Ascending aorta (tissue), 2 donors: ENCODE measurements at regions of chr9 and their contacts with region 1.

Region 1: DNA sequence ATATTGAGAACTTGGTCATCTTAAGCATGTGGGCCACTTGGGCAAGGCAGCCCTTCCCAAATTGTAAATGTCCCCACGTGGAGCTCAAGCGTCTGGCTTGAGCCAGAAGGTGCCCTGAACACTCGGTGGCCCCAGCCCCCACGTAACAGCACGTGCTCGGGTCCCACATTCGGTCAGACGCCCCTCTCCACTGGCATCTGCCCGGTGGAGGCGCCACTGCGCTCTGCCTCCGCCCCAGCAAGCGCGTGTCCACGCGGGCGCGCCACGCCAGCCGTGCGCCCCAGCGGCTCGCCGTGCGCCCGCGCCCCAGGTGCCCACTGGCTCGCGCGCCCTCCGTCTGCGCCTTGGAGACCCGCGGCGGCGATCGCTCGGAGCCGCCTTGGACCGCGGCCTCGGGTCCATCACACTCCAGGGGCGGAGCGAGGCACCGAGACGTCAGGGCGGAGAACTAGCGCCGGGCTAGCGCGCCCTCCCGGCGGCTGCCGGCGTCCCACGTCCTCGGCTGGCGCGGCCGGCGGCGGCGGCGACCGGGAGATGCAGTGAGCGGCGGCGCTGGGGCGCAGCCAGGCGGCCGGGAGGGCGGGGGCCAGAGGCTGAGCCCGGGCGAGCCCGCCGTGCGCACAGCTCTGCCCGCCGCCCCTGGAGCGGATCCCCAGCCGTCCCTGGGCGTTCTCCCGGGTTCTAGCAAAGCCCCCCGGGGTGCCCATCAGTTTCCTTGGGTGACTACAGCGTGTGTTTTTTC is at the start of gene PALM2AKAP2:
- DNase-seq: peak in 1 of 2 donors; percentile 86
- H3K4me3 ChIP-seq: peak within 1 kb of the TSS; percentile 68 to 88
- H3K27ac ChIP-seq: peak within 1 kb of the TSS; percentile 86 to 88
- H3K4me1 ChIP-seq: peaks cover 3 to 12% of the 10 kb centered on the region in 2 donors
- H3K27me3 ChIP-seq: no peaks in the 10 kb centered on the region
- CTCF ChIP-seq: peak; percentile 6 to 62 (median 31)
- total RNA-seq, gene PALM2AKAP2: 38.2 TPM

Region 2: GRCh38 chr9:109652964-109653363 is 126.9 kb before region 1 on chr9:
- intact Hi-C with region 1: loop called (anchors 5 kb)
- DNase-seq: no peak
- H3K4me3 ChIP-seq: no peak overlapping the region
- H3K27ac ChIP-seq: no peak overlapping the region
- H3K4me1 ChIP-seq: no peaks in the 10 kb centered on the region
- H3K27me3 ChIP-seq: no peaks in the 10 kb centered on the region
- CTCF ChIP-seq: peak; percentile 52 to 66 (median 53)

Region 3: DNA sequence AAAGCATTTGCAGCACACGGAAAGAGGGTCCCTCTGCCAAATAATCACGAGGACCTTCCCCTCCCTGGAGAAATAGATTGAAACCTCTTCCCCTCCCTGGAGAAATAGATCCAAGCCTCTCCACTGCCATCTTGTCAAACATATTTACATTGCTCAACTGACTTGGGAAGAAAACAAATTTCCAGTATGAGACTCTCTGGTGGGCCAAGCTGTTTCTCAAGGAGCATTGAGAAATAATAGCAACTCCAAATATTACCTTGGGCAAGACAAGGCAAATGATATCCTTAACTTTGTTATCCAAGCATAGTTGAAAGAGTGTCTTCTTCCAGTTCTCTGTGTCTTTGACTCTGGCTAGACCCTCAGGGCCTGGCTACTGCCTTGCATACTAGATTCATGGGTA is 45.1 kb before region 1 on chr9:
- intact Hi-C with region 1: no loop called
- DNase-seq: no peak
- H3K4me3 ChIP-seq: no peak overlapping the region
- H3K27ac ChIP-seq: no peak overlapping the region
- H3K4me1 ChIP-seq: peaks cover 0 to 8% of the 10 kb centered on the region in 2 donors
- H3K27me3 ChIP-seq: no peaks in the 10 kb centered on the region
- CTCF ChIP-seq: no peak

Region 4: DNA sequence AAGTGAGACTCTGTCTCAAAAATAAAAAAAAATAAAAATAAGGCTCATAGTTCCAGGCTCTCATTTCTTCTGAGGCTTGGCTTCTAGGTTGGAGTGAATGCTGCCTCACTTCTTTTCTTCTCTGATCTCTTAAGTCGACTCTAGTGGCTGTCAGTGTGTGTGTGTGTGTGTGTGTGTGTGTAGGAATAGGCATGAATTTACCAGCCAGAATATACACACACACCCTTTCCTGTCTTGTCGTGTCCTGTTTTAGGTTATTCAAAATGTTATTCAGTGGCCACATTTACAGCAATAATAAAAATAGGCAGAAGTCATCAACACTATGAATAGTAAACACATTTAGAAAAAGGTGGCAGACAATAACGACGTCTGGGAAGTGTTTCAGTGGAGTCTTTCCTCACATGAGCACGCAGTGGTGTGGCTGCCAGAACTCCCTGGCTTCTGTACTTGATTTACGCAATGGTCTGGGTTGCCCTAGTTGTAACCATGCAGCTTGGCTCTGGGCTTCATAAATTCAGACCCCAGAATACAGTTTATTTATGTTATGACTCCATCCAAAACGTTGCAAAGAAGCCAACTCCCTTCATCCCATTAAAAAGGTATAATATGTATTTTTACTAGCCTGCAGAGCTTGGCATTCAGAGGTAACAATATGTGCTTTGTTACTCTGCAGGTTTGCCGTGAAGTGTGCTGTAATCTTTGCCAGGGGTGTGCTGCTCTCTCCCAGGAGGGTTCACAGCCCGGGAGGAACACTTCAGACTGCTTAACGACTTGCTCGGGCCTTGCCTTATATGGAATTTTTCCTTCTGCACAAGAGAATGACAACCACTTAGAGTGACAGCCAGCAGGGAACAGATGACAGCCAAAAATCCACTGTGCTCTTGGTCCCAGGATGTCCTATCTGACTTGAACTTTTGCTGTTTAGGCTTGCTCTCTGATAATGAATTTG is 34.3 kb before region 1 on chr9:
- intact Hi-C with region 1: loop called (anchors 2 kb)
- DNase-seq: peak; percentile 44 to 88
- H3K4me3 ChIP-seq: peak overlapping the region in 1 of 2 donors; percentile 24
- H3K27ac ChIP-seq: peak overlapping the region; percentile 76 to 86
- H3K4me1 ChIP-seq: peaks cover 15 to 31% of the 10 kb centered on the region in 2 donors
- H3K27me3 ChIP-seq: no peaks in the 10 kb centered on the region
- CTCF ChIP-seq: no peak

Region 5: DNA sequence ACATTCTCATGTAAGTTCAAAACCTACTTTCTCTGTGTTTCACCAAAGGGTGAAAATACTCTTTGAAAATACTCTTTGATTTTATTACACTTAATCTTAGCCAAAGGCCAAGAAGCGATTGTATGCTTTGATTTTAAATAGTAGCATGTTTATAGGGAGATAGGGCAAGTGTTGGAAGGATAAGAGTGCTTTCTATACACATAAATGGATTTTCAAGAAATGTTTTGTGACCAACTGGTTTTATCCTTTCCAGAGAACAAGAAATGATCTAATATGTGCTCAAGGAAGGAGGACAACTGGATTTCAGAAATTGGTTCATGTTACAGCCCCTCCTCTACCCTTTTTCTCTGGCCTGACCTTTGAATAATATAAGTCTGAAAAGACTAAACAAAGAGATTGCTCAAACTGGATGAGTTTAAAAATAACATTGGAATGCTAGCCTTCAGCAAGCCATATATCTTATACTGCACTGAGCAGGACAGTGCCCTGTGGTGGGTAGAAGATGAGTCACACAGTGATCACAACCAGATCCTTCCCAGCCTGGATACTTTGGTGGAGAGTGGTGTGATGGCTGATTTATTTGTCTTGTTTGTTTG is 13.2 kb after region 1 on chr9:
- intact Hi-C with region 1: loop called (anchors 2 kb)
- DNase-seq: peak in 1 of 2 donors; percentile 63
- H3K4me3 ChIP-seq: no peak overlapping the region
- H3K27ac ChIP-seq: peak overlapping the region; percentile 88 to 96
- H3K4me1 ChIP-seq: peaks cover 20 to 81% of the 10 kb centered on the region in 2 donors
- H3K27me3 ChIP-seq: no peaks in the 10 kb centered on the region
- CTCF ChIP-seq: no peak

Region 6: DNA sequence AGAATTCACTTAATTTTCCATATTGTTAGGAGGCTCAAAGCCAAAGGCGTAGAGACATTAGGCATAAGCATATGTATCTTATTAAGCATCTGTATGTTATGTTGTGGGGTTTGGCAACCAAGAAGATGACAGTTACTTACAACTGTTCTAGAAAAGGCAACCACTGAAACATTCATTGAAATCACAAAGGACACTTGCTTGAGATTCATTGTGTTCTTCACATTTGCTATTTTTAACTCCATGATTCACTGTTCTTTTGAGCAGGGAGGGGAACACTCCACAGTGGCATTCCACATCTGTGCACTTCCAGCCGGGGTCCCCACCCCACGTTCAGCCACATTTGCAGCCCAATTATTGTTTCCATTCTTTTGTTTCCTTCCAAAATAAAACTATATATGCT is 107.2 kb after region 1 on chr9:
- intact Hi-C with region 1: no loop called
- DNase-seq: no peak
- H3K4me3 ChIP-seq: no peak overlapping the region
- H3K27ac ChIP-seq: no peak overlapping the region
- H3K4me1 ChIP-seq: peaks cover 0 to 25% of the 10 kb centered on the region in 2 donors
- H3K27me3 ChIP-seq: no peaks in the 10 kb centered on the region
- CTCF ChIP-seq: no peak